ENCODE measurements at regions of chr3 and their contacts with region 1.

Region 1: DNA sequence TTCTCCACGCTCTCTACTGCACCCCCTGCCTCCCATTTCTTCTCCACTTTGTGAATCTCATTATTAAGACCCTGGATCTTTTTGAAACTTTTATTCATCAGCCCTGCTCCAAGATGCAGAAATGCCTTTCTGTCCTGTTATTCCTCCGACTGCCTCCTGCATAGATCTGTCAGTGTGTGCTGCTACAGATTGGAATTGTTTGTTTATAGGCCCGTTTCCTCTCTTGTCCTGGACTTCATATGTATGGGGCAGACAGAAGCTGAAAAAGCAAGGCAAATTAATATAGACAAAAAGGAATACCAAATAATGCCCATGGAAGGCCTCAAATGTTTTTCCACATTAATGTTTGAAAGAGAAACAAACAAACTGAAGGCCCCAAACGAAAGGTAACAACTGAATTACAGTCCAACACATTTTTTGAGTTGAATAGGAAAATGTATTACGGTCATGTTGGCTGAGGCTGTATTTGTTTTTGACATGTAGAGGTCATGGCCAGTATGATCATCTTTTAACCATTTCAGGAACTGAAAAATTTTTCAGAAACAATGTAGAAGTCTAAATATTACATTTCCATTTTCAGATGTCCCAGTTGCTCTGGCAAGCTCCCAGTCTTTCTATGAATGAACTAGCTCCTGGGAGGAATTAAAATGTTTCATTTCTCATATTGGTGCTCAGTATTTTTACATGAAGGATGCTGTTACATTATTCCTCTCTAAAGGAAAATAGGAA is 8.8 kb downstream of the CHST2 start:
- DNase-seq: peak in 1 of 2 donors; percentile 22
- H3K4me3 ChIP-seq: no peak overlapping the region
- H3K27ac ChIP-seq: no peak overlapping the region
- H3K4me1 ChIP-seq: no peaks in the 10 kb centered on the region
- H3K27me3 ChIP-seq: no peaks in the 10 kb centered on the region
- CTCF ChIP-seq: no peak
- POLR2A ChIP-seq: no peak

Region 2: DNA sequence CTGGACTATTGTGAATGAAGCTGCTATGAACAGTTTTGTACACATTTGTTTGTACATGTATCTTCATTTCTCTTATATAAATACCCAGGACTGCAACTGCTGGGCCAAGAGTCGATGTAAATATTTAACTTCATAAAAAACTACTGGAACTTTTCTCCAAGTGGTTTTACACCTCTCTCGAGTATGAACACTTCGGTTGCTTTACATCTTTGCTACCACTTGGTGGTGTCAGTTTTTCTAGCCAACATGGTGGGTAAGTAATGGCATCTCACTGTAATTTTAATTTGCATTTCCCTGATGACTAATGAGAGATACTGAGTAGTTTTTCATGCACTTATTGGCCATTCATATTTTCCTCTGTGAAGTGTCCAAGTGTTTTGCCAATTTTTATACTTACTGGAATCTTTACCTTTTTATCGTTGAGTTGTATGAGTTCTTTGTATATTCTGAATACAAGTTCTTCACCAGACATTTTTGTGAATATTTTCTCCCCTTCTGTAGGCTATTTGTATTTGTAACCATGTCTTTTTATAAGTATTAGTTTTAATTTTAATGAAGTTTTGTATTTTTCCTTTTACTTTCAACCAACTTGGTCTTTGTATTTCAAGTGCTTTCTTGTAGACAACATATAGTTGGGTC is 283.9 kb before region 1 on chr3:
- intact Hi-C with region 1: no loop called
- DNase-seq: no peak
- H3K4me3 ChIP-seq: no peak overlapping the region
- H3K27ac ChIP-seq: no peak overlapping the region
- H3K4me1 ChIP-seq: no peaks in the 10 kb centered on the region
- H3K27me3 ChIP-seq: no peaks in the 10 kb centered on the region
- CTCF ChIP-seq: peak in 1 of 3 experiments; percentile 16
- POLR2A ChIP-seq: no peak

Region 3: GRCh38 chr3:143139762-143140161 is 11.4 kb after region 1 on chr3:
- intact Hi-C with region 1: no loop called
- DNase-seq: peak in 1 of 2 donors; percentile 65
- H3K4me3 ChIP-seq: no peak overlapping the region
- H3K27ac ChIP-seq: no peak overlapping the region
- H3K4me1 ChIP-seq: no peaks in the 10 kb centered on the region
- H3K27me3 ChIP-seq: no peaks in the 10 kb centered on the region
- CTCF ChIP-seq: no peak
- POLR2A ChIP-seq: no peak

Region 4: DNA sequence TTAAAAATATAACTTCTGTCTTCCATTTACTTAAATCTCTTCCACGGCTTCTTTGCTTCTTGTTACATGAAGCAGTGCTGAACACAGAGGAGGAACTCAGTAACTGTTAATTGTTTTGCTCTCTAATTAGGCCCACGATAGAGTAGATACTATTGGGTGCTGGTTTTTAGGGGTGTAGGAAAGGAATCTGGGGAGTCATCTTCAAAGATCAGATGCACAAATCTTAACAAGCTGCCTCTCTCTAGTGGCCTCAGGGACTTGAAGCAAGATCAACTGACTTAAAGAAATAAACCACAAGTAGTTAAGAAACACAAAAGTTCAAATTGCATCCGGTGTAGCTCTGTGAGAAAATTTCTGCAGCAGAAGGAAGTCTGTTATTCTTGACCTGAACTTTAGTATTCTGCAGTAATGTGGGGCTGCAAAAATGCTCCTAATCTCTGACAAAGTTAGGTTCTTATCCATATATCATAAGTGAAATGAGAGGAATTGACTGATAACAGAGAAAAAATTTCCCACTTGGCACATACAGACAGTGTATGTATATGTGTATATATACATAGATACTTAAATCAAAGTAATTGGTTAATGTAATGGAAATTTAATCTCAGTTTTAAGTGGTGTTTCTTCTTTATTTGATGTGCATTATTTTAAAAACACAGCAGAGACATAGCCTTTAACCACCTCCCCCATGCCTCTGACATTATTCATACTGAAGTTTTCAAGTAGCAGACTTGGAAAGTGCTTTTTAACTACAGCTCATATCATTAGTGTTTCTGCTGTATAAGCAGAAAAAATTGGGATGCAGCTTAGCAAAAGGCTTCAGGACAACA is 43.0 kb after region 1 on chr3:
- intact Hi-C with region 1: no loop called
- DNase-seq: no peak
- H3K4me3 ChIP-seq: no peak overlapping the region
- H3K27ac ChIP-seq: no peak overlapping the region
- H3K4me1 ChIP-seq: peaks cover 8% of the 10 kb centered on the region
- H3K27me3 ChIP-seq: no peaks in the 10 kb centered on the region
- CTCF ChIP-seq: no peak
- POLR2A ChIP-seq: no peak

Region 5: GRCh38 chr3:143200001-143200924 is 71.9 kb after region 1 on chr3:
- intact Hi-C with region 1: loop called (anchors 2 kb)
- DNase-seq: no peak
- H3K4me3 ChIP-seq: no peak overlapping the region
- H3K27ac ChIP-seq: no peak overlapping the region
- H3K4me1 ChIP-seq: no peaks in the 10 kb centered on the region
- H3K27me3 ChIP-seq: no peaks in the 10 kb centered on the region
- CTCF ChIP-seq: no peak
- POLR2A ChIP-seq: no peak

Region 6: DNA sequence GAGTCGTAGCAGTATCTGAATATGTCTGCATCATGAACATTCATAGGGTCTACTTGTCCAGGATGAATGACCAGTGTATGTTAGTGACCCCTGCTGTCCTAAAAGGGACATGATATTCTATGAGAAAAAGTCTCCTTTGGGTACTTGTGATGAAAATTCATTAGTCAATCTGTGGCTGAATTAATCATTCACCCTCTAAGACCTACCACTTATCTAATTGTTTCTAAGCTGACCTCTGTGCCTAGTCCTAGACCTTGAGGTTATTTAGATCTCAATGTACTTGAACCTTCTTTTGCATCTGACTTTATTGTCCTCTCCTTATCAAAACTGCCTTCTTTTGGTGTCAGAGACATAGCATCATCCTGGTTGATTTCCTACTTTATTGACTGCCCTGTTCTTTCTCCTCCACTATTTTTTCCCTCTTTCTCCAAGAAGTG is 1642.5 kb after region 1 on chr3:
- intact Hi-C with region 1: no loop called
- DNase-seq: no peak
- H3K4me3 ChIP-seq: no peak overlapping the region
- H3K27ac ChIP-seq: no peak overlapping the region
- H3K4me1 ChIP-seq: peaks cover 17% of the 10 kb centered on the region
- H3K27me3 ChIP-seq: no peaks in the 10 kb centered on the region
- CTCF ChIP-seq: peak in 1 of 3 experiments; percentile 9
- POLR2A ChIP-seq: no peak